ENCODE measurements at regions of chr1 and their contacts with region 1.

Region 1: GRCh38 chr1:156767101-156767878 is at the start of gene PRCC:
- DNase-seq: peak; percentile 97 to 99 (median 98)
- ATAC-seq: peak; percentile 95 to 98 (median 98)
- H3K4me3 ChIP-seq: peak within 1 kb of the TSS; percentile 52 to 100 (median 80)
- H3K27ac ChIP-seq: peak within 1 kb of the TSS; percentile 81 to 99 (median 95)
- H3K4me1 ChIP-seq: peaks cover 0 to 54% (median 44%) of the 10 kb centered on the region in 12 donors
- H3K27me3 ChIP-seq: no peaks in the 10 kb centered on the region
- CTCF ChIP-seq: no peak
- POLR2A ChIP-seq: peak in 1 of 2 donors; percentile 40
- total RNA-seq, gene PRCC: 34.6 to 55.5 (median 39.0) TPM

Region 2: DNA sequence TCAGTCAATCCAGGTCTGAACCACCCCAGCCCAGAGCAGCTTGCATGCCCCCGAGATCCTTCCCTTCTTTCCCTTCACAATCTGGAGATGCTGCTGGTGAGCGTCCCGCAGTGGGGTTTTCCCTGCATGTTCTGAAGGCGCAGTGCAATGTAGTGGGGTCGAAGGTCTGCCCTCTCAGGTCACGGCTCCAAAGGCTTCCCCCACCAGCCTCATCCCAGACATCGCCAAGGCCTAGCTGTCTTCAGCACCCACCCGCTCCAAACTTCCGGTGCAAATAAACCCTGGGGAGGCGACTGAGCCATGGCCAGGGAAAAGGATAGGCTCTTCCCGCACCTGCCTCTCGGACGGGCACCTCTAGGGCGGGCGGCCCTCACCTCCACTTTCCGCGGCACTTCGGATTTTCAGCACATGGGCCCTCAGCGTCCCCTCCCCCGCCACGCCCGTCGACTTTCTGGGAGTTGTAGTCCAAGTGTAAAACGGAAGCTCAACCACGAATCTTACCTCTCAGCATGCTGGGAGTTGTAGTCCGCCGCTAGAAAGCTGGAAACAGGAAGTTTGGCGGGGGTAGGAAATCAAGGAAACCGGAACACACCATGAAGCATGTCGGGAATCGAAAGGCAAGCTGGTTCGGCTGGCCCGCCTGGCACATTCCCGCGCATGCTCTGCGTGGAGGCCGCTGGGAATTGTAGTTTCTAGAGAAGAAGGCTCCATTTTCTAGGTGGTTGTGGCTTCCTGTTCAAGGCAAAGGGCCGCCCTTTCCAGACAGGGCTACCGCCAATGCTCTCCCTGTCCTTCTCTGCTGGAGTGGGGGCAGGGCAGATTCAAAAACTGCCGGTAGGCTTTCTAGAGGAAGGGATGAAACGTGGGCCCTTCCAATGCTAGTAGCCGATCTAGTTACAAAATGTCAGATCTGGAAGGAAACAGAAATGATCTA is 26.3 kb before region 1 on chr1 and contains the start of gene MRPL24:
- intact Hi-C with region 1: loop called in 5 of 10 experiments (anchors 1 to 2 kb)
- DNase-seq: peak; percentile 97 to 98 (median 98)
- ATAC-seq: peak; percentile 92 to 97 (median 94)
- H3K4me3 ChIP-seq: peak within 1 kb of the TSS; percentile 41 to 94 (median 74)
- H3K27ac ChIP-seq: peak within 1 kb of the TSS; percentile 66 to 94 (median 88)
- H3K4me1 ChIP-seq: peaks cover 6 to 34% (median 27%) of the 10 kb centered on the region in 12 donors
- H3K27me3 ChIP-seq: no peaks in the 10 kb centered on the region
- CTCF ChIP-seq: no peak
- POLR2A ChIP-seq: peak in 1 of 2 donors; percentile 47
- total RNA-seq, gene MRPL24: 74.8 to 117 (median 79.6) TPM

Region 3: DNA sequence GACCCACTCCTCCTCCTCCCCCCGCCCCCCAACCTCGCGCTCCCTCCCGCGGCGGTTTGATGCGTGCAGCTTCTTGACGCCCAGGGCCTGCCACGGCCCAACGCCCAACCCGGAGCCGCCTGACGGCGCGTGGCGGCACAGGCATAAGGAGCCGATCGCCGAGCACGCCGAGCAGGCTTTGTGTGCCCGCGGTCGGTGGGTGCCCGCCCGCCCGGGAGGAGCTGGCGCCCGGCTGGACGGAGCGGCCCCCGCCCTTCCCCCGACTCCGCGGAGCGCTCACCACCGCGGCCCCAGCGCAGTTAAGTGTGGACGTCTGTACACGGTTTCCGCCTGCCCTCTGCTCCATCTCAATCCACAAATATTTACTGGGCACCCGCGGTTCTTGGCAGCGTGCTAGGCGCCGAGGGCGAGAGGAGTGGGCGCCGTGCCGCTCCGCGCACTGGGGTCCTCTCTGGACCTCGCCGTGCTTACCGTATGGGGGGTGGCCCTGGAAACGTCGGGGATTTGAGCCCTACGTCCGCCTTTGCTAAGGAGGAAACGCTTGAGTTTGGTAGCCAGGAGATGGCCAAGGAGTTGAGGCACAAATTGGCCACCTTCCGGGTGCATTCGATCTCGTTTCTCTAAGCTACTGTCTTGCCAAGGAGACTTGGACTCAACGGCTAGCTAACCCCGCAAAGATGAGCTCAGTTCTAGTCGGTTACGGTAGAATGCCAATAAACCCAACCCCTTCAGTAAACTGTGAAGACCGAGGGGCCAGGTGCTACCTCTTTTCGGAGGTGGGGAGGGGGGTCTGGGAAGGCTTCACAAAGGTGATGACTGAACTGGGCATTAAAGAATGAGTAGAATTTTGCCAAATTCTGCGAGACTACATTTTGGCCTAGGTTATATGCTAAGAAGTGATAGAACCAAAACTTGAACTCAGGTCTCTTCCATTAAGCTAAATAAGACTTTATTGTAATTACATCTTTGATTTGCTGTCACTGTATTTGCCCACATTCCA is 15.2 kb before region 1 on chr1:
- intact Hi-C with region 1: loop called in 4 of 10 experiments (anchors 1 to 2 kb)
- DNase-seq: peak; percentile 98 to 99 (median 99)
- ATAC-seq: peak; percentile 72 to 89 (median 82)
- H3K4me3 ChIP-seq: peak overlapping the region; percentile 72 to 100 (median 96)
- H3K27ac ChIP-seq: peak overlapping the region; percentile 96 to 100 (median 99)
- H3K4me1 ChIP-seq: peaks cover 17 to 58% (median 44%) of the 10 kb centered on the region in 12 donors
- H3K27me3 ChIP-seq: no peaks in the 10 kb centered on the region
- CTCF ChIP-seq: peak in 1 of 12 donors; percentile 36
- POLR2A ChIP-seq: peak in 1 of 2 donors; percentile 73

Region 4: GRCh38 chr1:156936721-156937220 is 169.5 kb after region 1 on chr1:
- intact Hi-C with region 1: no loop called
- DNase-seq: no peak
- ATAC-seq: no peak
- H3K4me3 ChIP-seq: no peak overlapping the region
- H3K27ac ChIP-seq: no peak overlapping the region
- H3K4me1 ChIP-seq: peaks cover 0 to 2% (median 0%) of the 10 kb centered on the region in 12 donors
- H3K27me3 ChIP-seq: no peaks in the 10 kb centered on the region
- CTCF ChIP-seq: no peak
- POLR2A ChIP-seq: no peak

Region 5: GRCh38 chr1:157315544-157315943 is 548.3 kb after region 1 on chr1:
- intact Hi-C with region 1: no loop called
- DNase-seq: no peak
- ATAC-seq: no peak
- H3K4me3 ChIP-seq: no peak overlapping the region
- H3K27ac ChIP-seq: no peak overlapping the region
- H3K4me1 ChIP-seq: no peaks in the 10 kb centered on the region
- H3K27me3 ChIP-seq: peaks cover 0 to 9% (median 0%) of the 10 kb centered on the region in 9 donors
- CTCF ChIP-seq: no peak
- POLR2A ChIP-seq: no peak